ENCODE measurements at regions of chr1 and their contacts with region 1.

Region 1: DNA sequence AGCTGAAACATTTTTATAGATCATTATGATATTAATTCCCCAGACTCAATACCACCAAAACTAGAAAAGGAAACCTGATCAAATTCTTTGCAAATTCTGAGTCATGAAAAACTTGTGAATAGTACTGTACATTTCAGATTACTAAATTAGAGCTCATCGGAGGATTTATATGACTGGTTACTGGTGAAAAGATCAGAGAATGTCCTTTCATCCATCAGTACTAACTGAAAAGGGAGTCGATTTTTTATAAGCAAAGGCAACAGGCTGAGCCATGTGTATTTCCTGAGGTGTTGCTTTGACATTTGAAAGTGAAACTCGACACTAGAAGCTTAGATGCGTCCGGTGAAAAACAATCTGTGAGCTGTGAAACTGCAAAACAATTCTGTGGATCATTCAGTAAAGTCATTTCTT is 155.7 kb downstream of the TNFSF18 start:
- DNase-seq: peak; percentile 35
- ATAC-seq: peak; percentile 84
- H3K4me3 Mint-ChIP-seq: peak overlapping the region; percentile 20
- H3K27ac Mint-ChIP-seq: peak overlapping the region; percentile 32
- H3K4me1 Mint-ChIP-seq: peaks cover 42% of the 10 kb centered on the region
- H3K27me3 Mint-ChIP-seq: peaks cover 29% of the 10 kb centered on the region

Region 2: GRCh38 chr1:172662464-172663109 is 232.5 kb before region 1 on chr1:
- CTCF ChIA-PET with region 1: interaction called, 3 read pairs
- POLR2A ChIA-PET with region 1: no interaction called
- intact Hi-C with region 1: loop called in 1 of 2 experiments (anchors 10 kb)
- DNase-seq: peak; percentile 95
- ATAC-seq: peak; percentile 82
- H3K4me3 Mint-ChIP-seq: peak overlapping the region; percentile 78
- H3K27ac Mint-ChIP-seq: peak overlapping the region; percentile 57
- H3K4me1 Mint-ChIP-seq: peaks cover 74% of the 10 kb centered on the region
- H3K27me3 Mint-ChIP-seq: peaks cover 17% of the 10 kb centered on the region

Region 3: GRCh38 chr1:172870901-172871606 is 24.0 kb before region 1 on chr1:
- CTCF ChIA-PET with region 1: interaction called, 4 read pairs
- POLR2A ChIA-PET with region 1: interaction called, 5 read pairs
- intact Hi-C with region 1: loop called (anchors 1 kb)
- DNase-seq: peak; percentile 10
- ATAC-seq: peak; percentile 54
- H3K4me3 Mint-ChIP-seq: no peak overlapping the region
- H3K27ac Mint-ChIP-seq: no peak overlapping the region
- H3K4me1 Mint-ChIP-seq: peaks cover 33% of the 10 kb centered on the region
- H3K27me3 Mint-ChIP-seq: peaks cover 32% of the 10 kb centered on the region

Region 4: GRCh38 chr1:172917972-172918371 is 22.9 kb after region 1 on chr1:
- CTCF ChIA-PET with region 1: no interaction called
- POLR2A ChIA-PET with region 1: no interaction called
- intact Hi-C with region 1: loop called in 1 of 2 experiments (anchors 2 kb)
- DNase-seq: no peak
- ATAC-seq: no peak
- H3K4me3 Mint-ChIP-seq: no peak overlapping the region
- H3K27ac Mint-ChIP-seq: no peak overlapping the region
- H3K4me1 Mint-ChIP-seq: no peaks in the 10 kb centered on the region
- H3K27me3 Mint-ChIP-seq: peaks cover 3% of the 10 kb centered on the region

Region 5: DNA sequence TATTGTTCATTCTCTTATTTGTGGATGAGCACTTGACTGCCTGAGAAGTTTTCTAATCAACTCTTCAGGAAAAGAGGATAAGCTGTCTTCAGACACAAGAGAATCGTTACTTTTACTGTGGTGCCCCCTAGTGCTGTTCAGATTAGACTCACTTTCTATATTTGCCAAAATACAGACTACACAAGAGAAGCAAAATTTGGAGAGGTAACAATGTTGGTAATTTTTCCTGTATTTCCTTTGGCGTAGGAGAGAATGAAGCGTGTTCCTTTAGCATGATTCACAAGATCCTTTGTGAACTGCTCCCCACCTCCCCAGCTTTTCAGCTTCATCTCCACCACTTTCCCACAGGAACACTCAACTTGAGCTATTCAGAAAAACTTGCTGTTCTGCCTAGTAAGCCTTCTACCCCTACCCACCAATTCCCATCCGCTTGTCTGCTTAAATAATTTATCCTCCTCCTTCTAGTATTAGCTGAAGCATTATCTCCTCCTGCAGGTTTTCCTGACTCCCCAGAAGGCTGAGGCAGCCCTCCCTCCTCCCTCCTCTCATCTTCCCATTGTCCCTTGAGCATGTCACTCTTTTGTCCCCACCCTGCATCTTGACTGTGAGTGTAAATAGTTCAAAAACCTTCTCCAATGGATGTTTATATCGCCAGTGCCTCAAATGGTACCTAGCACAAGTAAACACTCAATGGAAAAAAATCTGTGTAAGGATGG is 307.5 kb after region 1 on chr1:
- CTCF ChIA-PET with region 1: no interaction called
- POLR2A ChIA-PET with region 1: interaction called, 3 read pairs
- intact Hi-C with region 1: loop called (anchors 2 to 5 kb)
- DNase-seq: peak; percentile 14
- ATAC-seq: no peak
- H3K4me3 Mint-ChIP-seq: no peak overlapping the region
- H3K27ac Mint-ChIP-seq: no peak overlapping the region
- H3K4me1 Mint-ChIP-seq: peaks cover 33% of the 10 kb centered on the region
- H3K27me3 Mint-ChIP-seq: peaks cover 13% of the 10 kb centered on the region

Region 6: GRCh38 chr1:173784997-173785396 is 889.9 kb after region 1 on chr1:
- CTCF ChIA-PET with region 1: no interaction called
- POLR2A ChIA-PET with region 1: no interaction called
- intact Hi-C with region 1: no loop called
- DNase-seq: no peak
- ATAC-seq: no peak
- H3K4me3 Mint-ChIP-seq: no peak overlapping the region
- H3K27ac Mint-ChIP-seq: no peak overlapping the region
- H3K4me1 Mint-ChIP-seq: no peaks in the 10 kb centered on the region
- H3K27me3 Mint-ChIP-seq: no peaks in the 10 kb centered on the region

Measured in activated CD4-positive, alpha-beta T cell treated with anti-CD3 and anti-CD28 coated beads for 36 hours (primary cell).